Calu3 (cell line): ENCODE measurements at regions of chr10 and their contacts with region 1.

Region 1: GRCh38 chr10:31031558-31032257 is at the start of gene ZNF438:
- DNase-seq: peak; percentile 95
- H3K4me3 Mint-ChIP-seq: peak within 1 kb of the TSS; percentile 82
- H3K27ac Mint-ChIP-seq: peak within 1 kb of the TSS; percentile 42
- H3K4me1 Mint-ChIP-seq: peaks cover 46% of the 10 kb centered on the region
- H3K27me3 Mint-ChIP-seq: no peaks in the 10 kb centered on the region
- CTCF ChIP-seq: peak; percentile 54
- total RNA-seq, gene ZNF438: 4.0 and 4.3 TPM in 2 replicates

Region 2: GRCh38 chr10:30783939-30784500 is 247.7 kb before region 1 on chr10:
- CTCF ChIA-PET with region 1: interaction called, 16 read pairs
- intact Hi-C with region 1: loop called (anchors 5 kb)
- DNase-seq: peak; percentile 89
- H3K4me3 Mint-ChIP-seq: peak overlapping the region; percentile 69
- H3K27ac Mint-ChIP-seq: peak overlapping the region; percentile 45
- H3K4me1 Mint-ChIP-seq: peaks cover 26% of the 10 kb centered on the region
- H3K27me3 Mint-ChIP-seq: peaks cover 14% of the 10 kb centered on the region
- CTCF ChIP-seq: peak; percentile 81

Region 3: GRCh38 chr10:31075434-31075833 is 43.7 kb after region 1 on chr10:
- CTCF ChIA-PET with region 1: no interaction called
- intact Hi-C with region 1: loop called (anchors 2 kb)
- DNase-seq: peak; percentile 43
- H3K4me3 Mint-ChIP-seq: peak overlapping the region; percentile 17
- H3K27ac Mint-ChIP-seq: peak overlapping the region; percentile 67
- H3K4me1 Mint-ChIP-seq: peaks cover 45% of the 10 kb centered on the region
- H3K27me3 Mint-ChIP-seq: no peaks in the 10 kb centered on the region
- CTCF ChIP-seq: no peak

Region 4: GRCh38 chr10:31101123-31101522 is 69.4 kb after region 1 on chr10:
- CTCF ChIA-PET with region 1: interaction called, 14 read pairs
- intact Hi-C with region 1: loop called (anchors 5 kb)
- DNase-seq: peak; percentile 73
- H3K4me3 Mint-ChIP-seq: peak overlapping the region; percentile 41
- H3K27ac Mint-ChIP-seq: peak overlapping the region; percentile 100
- H3K4me1 Mint-ChIP-seq: peaks cover 26% of the 10 kb centered on the region
- H3K27me3 Mint-ChIP-seq: no peaks in the 10 kb centered on the region
- CTCF ChIP-seq: no peak

Region 5: DNA sequence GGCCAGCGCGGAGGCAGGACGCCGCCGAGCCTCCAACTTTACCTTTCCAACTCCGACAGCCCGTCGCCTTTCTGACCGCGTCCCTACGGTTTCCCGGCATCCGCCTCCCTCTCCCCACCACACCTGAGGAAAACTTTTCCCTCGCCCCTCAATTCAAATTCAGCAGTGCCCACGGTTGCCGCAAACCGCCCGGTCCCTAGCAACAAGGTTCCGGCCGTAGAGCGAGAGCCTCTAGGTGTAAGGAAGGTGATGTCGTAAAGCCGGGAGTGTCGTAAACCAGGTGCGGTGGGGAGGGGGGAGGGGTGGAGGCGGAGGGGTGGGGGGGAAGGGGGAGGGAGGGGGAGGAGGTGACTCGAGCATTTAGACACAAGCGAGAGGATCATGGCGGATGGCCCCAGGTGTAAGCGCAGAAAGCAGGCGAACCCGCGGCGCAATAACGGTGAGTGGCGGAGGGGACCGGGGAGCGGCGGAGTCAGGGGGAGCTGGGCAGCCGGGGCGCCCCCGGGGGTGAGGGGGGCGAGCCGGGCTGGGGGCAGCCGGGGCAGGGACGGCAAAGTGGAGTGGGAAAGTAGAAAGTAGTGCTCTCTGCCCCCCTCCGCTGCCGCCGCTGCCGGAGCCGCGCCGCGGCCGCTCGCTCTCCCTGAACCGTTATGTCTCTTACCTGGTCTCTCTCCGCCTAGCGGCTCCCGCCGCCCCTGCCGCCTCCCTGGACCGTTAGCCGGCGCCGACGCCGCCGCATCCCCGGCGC is 287.3 kb after region 1 on chr10 and contains the start of gene ZEB1:
- CTCF ChIA-PET with region 1: no interaction called
- intact Hi-C with region 1: loop called (anchors 5 kb)
- DNase-seq: peak; percentile 89
- H3K4me3 Mint-ChIP-seq: peak within 1 kb of the TSS; percentile 83
- H3K27ac Mint-ChIP-seq: peak within 1 kb of the TSS; percentile 82
- H3K4me1 Mint-ChIP-seq: peaks cover 27% of the 10 kb centered on the region
- H3K27me3 Mint-ChIP-seq: no peaks in the 10 kb centered on the region
- CTCF ChIP-seq: peak; percentile 59
- total RNA-seq, gene ZEB1: 7.1 and 10.3 TPM in 2 replicates

Region 6: GRCh38 chr10:31467796-31468535 is 436.3 kb after region 1 on chr10:
- CTCF ChIA-PET with region 1: interaction called, 8 read pairs
- intact Hi-C with region 1: loop called (anchors 2 kb)
- DNase-seq: peak; percentile 49
- H3K4me3 Mint-ChIP-seq: no peak overlapping the region
- H3K27ac Mint-ChIP-seq: no peak overlapping the region
- H3K4me1 Mint-ChIP-seq: no peaks in the 10 kb centered on the region
- H3K27me3 Mint-ChIP-seq: no peaks in the 10 kb centered on the region
- CTCF ChIP-seq: peak; percentile 80

Region 7: DNA sequence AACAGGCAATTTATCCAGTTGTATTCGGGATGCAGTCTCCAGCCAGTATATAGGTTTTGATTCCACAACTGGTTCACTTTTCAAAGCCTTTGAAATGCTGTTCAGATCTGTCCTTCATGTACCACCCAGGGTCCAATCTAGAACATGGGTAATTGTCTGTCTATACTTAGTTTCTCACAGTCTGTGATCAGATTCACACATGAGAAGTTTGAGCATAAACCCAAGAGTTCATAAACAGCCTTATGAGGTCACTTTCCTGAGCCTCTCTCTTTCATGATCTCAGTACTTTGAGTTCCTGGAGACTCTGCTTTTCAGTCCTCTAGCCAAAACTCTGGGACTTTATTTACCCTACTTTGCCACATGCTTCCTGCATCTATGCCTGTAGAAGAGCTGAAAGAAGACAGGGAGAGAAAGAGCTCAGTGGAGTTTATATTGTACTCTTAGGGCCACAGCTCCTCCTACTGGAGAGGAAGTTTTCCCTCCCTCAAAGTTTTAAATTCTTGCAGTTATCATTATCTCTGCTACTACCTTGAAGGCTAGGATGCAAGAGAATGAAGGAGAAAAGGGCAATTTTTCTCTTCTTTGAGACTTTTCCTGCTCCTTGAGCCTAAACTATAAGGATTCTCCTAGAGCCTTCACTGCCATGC is 459.3 kb after region 1 on chr10:
- CTCF ChIA-PET with region 1: interaction called, 15 read pairs
- intact Hi-C with region 1: loop called (anchors 5 kb)
- DNase-seq: peak; percentile 37
- H3K4me3 Mint-ChIP-seq: no peak overlapping the region
- H3K27ac Mint-ChIP-seq: no peak overlapping the region
- H3K4me1 Mint-ChIP-seq: no peaks in the 10 kb centered on the region
- H3K27me3 Mint-ChIP-seq: no peaks in the 10 kb centered on the region
- CTCF ChIP-seq: peak; percentile 57